ENCODE measurements at regions of chr2 and their contacts with region 1.

Region 1: DNA sequence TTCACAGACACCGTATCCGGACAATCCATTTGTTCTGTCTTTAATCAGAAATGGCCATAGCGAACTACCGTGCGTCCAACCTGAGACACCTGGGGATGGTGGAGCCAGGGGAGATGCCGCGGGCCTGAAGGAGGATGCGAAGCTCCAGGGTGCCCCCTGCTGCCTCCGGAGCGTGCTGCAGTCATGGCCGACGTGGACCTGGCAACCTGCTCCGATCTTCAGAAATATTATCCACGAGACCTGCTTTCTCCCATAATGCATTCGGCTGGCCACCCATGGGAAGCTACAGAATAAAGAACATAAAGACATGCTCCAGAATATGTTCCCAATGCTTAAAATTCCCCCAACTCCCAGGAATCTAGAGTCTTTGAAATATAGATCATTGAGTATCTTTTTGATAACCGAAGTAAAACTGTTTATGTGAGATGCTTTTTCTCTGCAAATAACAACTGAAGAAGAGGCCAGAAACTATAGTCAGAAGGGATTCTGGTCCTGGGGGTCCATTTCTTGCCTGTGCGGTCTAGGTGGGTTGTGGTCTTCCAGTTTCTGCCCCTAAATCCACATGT is 30.7 kb upstream of the SLC66A3 start:
- DNase-seq: peak; percentile 30 to 89
- H3K4me3 ChIP-seq: no peak overlapping the region
- H3K4me1 ChIP-seq: no peaks in the 10 kb centered on the region
- H3K27me3 ChIP-seq: no peaks in the 10 kb centered on the region

Region 2: GRCh38 chr2:10832203-10832936 is 292.2 kb before region 1 on chr2:
- in situ Hi-C with region 1: loop called (anchors 5 kb)
- DNase-seq: peak; percentile 82 to 88
- H3K4me3 ChIP-seq: no peak overlapping the region
- H3K4me1 ChIP-seq: peaks cover 6% of the 10 kb centered on the region
- H3K27me3 ChIP-seq: peaks cover 34% of the 10 kb centered on the region

Region 3: DNA sequence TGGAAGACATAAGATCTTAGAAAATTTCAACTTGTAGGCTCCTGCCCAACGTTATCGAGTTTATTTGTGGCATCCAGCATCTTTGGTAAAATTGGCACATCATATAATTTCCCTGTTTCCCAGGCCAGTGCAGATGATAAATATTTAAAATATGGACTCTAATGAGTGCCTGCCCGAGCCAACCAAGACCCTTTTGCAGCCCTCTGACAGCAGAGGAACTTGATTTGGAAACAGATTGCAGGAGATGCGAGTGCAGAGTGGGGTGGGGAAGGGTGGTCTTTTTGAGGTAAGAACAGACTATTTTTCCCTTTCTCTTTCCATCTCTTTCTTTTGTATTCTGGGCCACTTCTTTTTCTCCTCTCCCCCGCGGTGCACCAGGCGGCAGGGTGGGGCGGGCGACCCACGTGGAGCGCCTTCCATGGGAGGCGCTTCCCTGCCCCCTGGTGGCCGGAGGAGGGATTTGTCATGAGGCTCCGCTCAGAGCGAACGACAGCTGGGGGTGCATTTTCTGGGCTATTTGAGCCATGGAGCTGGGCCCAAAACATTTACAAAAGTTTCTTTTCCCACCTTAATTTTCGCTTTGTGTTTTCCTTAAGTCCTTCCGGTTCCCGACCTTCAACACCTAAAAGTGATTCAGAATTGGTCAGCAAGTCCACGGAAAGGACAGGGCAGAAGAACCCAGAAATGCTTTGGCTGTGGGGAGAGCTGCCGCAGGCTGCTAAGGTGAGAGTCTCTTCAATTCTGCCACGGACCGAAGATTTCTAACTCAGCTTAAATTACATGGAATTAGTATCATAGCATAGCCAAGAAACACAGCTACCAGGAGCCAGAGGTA is 654.6 kb after region 1 on chr2:
- in situ Hi-C with region 1: loop called (anchors 25 kb)
- DNase-seq: peak; percentile 48 to 90
- H3K4me3 ChIP-seq: no peak overlapping the region
- H3K4me1 ChIP-seq: no peaks in the 10 kb centered on the region; the same call in 1 of the 2 replicates
- H3K27me3 ChIP-seq: no peaks in the 10 kb centered on the region

Measured in HAP-1 (cell line).